Activated CD4-positive, alpha-beta memory T cell treated with anti-CD3 and anti-CD28 coated beads, Interleukin-2, amount 10 ng/mL, durations not matched to agents 7 days and 5 days (primary cell): ENCODE measurements at regions of chr5 and their contacts with region 1.

Region 1: GRCh38 chr5:142145106-142145900 is 36.7 kb downstream of the NDFIP1 start:
- DNase-seq: peak; percentile 69
- H3K4me3 Mint-ChIP-seq: no peak overlapping the region
- H3K27ac Mint-ChIP-seq: no peak overlapping the region
- H3K4me1 Mint-ChIP-seq: no peaks in the 10 kb centered on the region
- H3K27me3 Mint-ChIP-seq: no peaks in the 10 kb centered on the region

Region 2: GRCh38 chr5:141992349-141992963 is 152.8 kb before region 1 on chr5:
- CTCF ChIA-PET with region 1: interaction called, 203 read pairs
- POLR2A ChIA-PET with region 1: interaction called, 5 read pairs
- DNase-seq: peak; percentile 79
- H3K4me3 Mint-ChIP-seq: no peak overlapping the region
- H3K27ac Mint-ChIP-seq: no peak overlapping the region
- H3K4me1 Mint-ChIP-seq: peaks cover 2% of the 10 kb centered on the region
- H3K27me3 Mint-ChIP-seq: no peaks in the 10 kb centered on the region

Region 3: DNA sequence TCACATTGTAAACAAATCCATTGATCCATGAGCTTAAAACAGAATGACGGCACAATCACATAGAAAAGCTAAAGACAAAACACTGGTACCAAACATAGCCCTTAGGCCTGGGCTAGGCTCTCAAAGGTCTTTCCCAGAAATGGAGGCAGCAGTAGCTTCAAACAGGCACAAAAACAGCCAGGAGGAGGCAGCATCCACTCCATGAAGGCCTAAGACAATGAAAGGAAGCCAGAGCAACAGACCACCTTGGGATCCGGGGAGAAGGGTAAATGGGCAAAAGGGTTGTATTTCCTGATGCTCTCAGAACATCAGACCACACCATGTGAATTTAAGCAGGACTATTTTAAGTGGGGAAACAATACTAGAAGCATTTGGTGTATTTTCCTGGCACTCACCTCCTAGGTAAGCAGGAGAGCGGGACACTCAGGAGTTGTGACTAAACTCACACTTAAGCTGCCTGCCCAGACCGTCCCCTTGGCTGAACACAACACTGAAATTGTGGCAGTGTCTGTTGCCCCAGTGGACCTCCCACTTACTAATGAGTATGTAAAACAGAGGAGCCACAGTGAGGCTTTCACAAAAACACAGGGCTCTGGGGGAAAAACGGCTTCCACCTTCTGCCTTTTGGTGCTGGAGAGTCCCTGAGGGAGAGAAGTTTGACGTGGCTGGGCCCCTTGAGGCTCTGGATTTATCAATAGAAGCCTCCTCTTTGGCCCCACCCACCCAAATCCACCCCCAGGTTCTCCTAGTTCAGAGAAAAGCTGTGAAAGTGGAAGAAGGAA is 144.4 kb before region 1 on chr5:
- CTCF ChIA-PET with region 1: interaction called, 203 read pairs
- POLR2A ChIA-PET with region 1: no interaction called
- DNase-seq: no peak
- H3K4me3 Mint-ChIP-seq: no peak overlapping the region
- H3K27ac Mint-ChIP-seq: no peak overlapping the region
- H3K4me1 Mint-ChIP-seq: peaks cover 11% of the 10 kb centered on the region
- H3K27me3 Mint-ChIP-seq: no peaks in the 10 kb centered on the region

Region 4: GRCh38 chr5:142412581-142412980 is 267.3 kb after region 1 on chr5:
- CTCF ChIA-PET with region 1: no interaction called
- POLR2A ChIA-PET with region 1: no interaction called
- DNase-seq: no peak
- H3K4me3 Mint-ChIP-seq: no peak overlapping the region
- H3K27ac Mint-ChIP-seq: no peak overlapping the region
- H3K4me1 Mint-ChIP-seq: no peaks in the 10 kb centered on the region
- H3K27me3 Mint-ChIP-seq: peaks cover 2% of the 10 kb centered on the region